Activated T-helper 1 cell treated with anti-CD3 and anti-CD28 coated beads, Interleukin-12 subunit alpha, Interleukin-12 subunit beta, Interleukin-2, Interleukin-4 antibody, amounts not matched to agents 30 ng/mL and 10 ng/mL and 1 ng/mL, durations not matched to agents 14 hours and 24 hours and 36 hours (primary cell): ENCODE measurements at regions of chr17 and their contacts with region 1.

Region 1: GRCh38 chr17:34420254-34420766 is 57.3 kb upstream of the CCL1 start:
- DNase-seq: peak; percentile 30
- H3K4me3 Mint-ChIP-seq: no peak overlapping the region
- H3K27ac Mint-ChIP-seq: no peak overlapping the region
- H3K4me1 Mint-ChIP-seq: no peaks in the 10 kb centered on the region
- H3K27me3 Mint-ChIP-seq: peaks cover 51% of the 10 kb centered on the region

Region 2: GRCh38 chr17:34519282-34519681 is 99.0 kb after region 1 on chr17:
- intact Hi-C with region 1: loop called (anchors 5 kb)
- DNase-seq: no peak
- H3K4me3 Mint-ChIP-seq: no peak overlapping the region
- H3K27ac Mint-ChIP-seq: no peak overlapping the region
- H3K4me1 Mint-ChIP-seq: no peaks in the 10 kb centered on the region
- H3K27me3 Mint-ChIP-seq: peaks cover 3% of the 10 kb centered on the region